ENCODE measurements at regions of chr15 and their contacts with region 1.

Region 1: DNA sequence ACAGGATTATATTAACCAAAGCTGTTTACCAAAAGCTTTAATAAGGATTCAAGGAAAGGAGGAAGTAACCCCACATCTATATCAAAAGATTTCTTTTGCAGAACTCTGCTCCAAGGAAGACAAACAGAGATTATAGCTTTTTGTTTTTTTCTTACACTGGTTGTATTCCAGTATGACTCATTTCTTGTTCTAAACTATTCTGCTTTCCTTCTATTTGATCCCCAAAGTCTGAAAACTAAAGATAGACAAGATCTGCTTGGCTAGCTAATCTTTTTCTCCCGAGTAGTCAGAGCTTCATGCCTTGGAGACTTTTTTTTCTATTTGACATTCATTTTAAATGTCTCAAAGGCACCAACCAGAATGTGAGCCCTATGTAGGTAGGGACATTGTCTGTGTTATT is 36.8 kb upstream of the FRMD5 start:
- DNase-seq: no peak
- H3K4me3 ChIP-seq: no peak overlapping the region
- H3K27ac ChIP-seq: no peak overlapping the region
- H3K4me1 ChIP-seq: no peaks in the 10 kb centered on the region
- H3K27me3 ChIP-seq: no peaks in the 10 kb centered on the region
- CTCF ChIP-seq: no peak
- EP300 ChIP-seq: no peak
- POLR2A ChIP-seq: no peak
- RAD21 ChIP-seq: no peak

Region 2: DNA sequence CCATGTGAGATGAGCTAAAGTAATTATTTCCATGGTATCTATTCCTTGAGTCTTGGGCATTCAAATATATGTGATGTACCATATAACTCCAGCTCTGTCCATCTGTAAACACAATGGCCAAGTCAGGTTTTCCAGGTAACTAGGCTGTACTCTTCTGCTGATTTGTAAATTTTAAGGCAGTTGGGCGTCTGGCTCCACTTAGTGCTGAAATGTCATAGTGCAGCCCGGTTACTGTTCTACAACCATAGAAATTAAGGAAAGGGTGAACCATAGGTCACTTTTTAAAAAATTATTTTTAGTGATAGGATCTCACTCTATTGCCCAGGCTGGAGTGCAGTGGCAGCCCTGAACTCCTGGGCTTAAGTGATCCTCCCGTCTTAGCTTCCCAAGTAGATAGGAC is 12.0 kb after region 1 on chr15:
- CTCF ChIA-PET with region 1: interaction called, 10 read pairs
- POLR2A ChIA-PET with region 1: no interaction called
- DNase-seq: no peak
- H3K4me3 ChIP-seq: no peak overlapping the region
- H3K27ac ChIP-seq: no peak overlapping the region
- H3K4me1 ChIP-seq: no peaks in the 10 kb centered on the region
- H3K27me3 ChIP-seq: no peaks in the 10 kb centered on the region
- CTCF ChIP-seq: peak in 2 of 3 experiments; percentile 28 to 39; a peak in 3 of 4 replicates
- EP300 ChIP-seq: no peak
- POLR2A ChIP-seq: no peak
- RAD21 ChIP-seq: peak; percentile 48 to 62

Measured in H1 (cell line).